Endothelial cell of umbilical vein (primary cell): ENCODE measurements at regions of chr9 and their contacts with region 1.

Region 1: DNA sequence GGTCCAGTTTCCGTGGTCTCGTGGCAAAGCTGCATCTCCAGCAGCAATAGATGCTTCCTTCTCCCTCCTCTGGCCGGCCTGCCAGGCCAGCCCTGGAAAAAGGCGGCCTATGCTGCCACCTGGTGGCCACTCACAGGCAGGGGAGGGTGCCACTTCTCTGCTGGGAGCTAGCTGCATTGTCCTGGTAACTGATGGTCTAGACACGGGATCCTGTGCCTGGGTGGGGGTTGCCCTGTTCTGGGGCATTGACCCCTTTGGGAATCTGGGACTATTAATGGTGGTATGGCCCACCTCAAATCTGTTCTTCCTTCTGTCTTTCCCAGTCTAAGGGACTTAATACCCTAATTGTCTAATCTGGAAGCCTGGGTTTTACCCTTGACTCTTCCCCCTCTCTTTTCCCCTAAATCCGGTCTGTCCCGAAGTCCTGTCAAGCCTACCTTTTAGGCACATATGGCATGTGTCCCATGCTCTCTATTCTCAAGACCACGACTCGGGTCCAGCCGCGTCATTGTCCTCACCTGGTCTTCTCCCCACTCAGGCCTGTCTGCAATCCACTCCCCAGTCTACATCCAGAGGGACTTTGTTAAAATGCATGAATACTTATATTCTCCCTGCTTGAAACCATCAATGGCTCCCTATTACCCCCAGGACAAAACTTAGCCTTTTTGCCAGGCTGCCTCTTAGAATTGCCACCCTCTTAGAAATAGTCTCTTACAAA is 20.0 kb upstream of the PTGS1 start:
- DNase-seq: peak; percentile 77
- H3K4me3 ChIP-seq: no peak overlapping the region
- H3K27ac ChIP-seq: no peak overlapping the region
- H3K4me1 ChIP-seq: peaks cover 23% of the 10 kb centered on the region
- H3K27me3 ChIP-seq: no peaks in the 10 kb centered on the region
- CTCF ChIP-seq: peak; percentile 92 to 94
- POLR2A ChIP-seq: no peak

Region 2: GRCh38 chr9:122125158-122125508 is 225.7 kb before region 1 on chr9:
- CTCF ChIA-PET with region 1: interaction called, 576 read pairs
- POLR2A ChIA-PET with region 1: interaction called, 4 read pairs
- dilution Hi-C with region 1: loop called (anchors 25 kb)
- intact Hi-C with region 1: loop called (anchors 1 kb)
- DNase-seq: peak; percentile 77
- H3K4me3 ChIP-seq: no peak overlapping the region
- H3K27ac ChIP-seq: no peak overlapping the region
- H3K4me1 ChIP-seq: peaks cover 20% of the 10 kb centered on the region
- H3K27me3 ChIP-seq: no peaks in the 10 kb centered on the region
- CTCF ChIP-seq: peak; percentile 85 to 95
- POLR2A ChIP-seq: no peak

Region 3: GRCh38 chr9:122151267-122151828 is 199.4 kb before region 1 on chr9:
- CTCF ChIA-PET with region 1: interaction called, 55 read pairs
- POLR2A ChIA-PET with region 1: no interaction called
- dilution Hi-C with region 1: no loop called
- intact Hi-C with region 1: no loop called
- DNase-seq: no peak
- H3K4me3 ChIP-seq: no peak overlapping the region
- H3K27ac ChIP-seq: no peak overlapping the region
- H3K4me1 ChIP-seq: peaks cover 3% of the 10 kb centered on the region
- H3K27me3 ChIP-seq: no peaks in the 10 kb centered on the region
- CTCF ChIP-seq: no peak
- POLR2A ChIP-seq: no peak

Region 4: DNA sequence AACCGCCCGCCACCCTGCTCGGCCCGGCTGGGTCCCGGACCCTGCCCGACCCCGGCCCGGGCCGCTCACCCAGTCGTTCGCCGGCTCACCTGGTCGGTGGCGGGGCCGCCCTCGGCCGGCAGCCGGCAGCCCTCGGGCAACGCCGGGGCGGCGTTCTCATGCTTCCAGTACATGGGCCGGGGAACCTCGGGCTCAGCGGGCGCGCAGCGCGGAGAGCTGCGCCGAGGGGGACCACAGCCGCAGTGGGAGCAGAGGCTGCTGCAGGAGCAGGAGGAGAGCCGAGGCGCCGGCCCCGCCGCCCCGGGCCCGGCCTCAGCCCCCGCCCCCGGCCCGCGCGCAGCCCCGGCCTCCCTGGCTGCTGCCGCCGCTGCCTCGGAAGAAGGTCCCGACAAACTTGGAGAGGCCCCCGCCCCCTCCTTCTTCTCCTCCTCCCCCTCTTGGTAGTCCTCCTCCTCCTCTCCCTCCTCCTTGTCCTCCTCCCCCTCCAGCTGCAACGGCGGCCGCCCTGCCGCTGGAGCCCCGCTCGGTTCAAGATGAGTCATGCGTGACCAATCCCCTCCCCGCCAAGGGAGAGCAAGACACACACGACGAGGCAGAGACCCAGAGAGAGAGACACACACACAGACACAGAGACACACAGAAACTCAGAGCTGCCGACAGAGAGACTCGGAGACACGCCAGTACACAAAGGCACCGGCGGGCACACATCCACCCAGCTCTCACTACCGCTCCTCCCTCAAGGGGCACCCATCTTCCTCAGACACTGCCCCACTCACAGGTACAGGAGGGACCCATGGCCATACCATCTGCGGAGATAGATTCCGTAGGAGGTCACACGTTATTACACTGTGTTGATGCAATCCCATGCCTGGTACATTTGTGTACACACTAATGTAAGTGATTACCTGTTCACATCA is 122.0 kb before region 1 on chr9 and contains the start of gene LHX6:
- CTCF ChIA-PET with region 1: interaction called, 15 read pairs
- POLR2A ChIA-PET with region 1: no interaction called
- dilution Hi-C with region 1: no loop called
- intact Hi-C with region 1: loop called (anchors 2 kb)
- DNase-seq: peak; percentile 43
- H3K4me3 ChIP-seq: peak within 1 kb of the TSS; percentile 18 to 55 (median 41)
- H3K27ac ChIP-seq: no peak within 1 kb of the TSS
- H3K4me1 ChIP-seq: peaks cover 10% of the 10 kb centered on the region
- H3K27me3 ChIP-seq: peaks cover 42 to 54% of the 10 kb centered on the region in 2 experiments
- CTCF ChIP-seq: no peak
- POLR2A ChIP-seq: no peak
- total RNA-seq, gene LHX6: 9.4 and 18.4 TPM in 2 replicates

Region 5: DNA sequence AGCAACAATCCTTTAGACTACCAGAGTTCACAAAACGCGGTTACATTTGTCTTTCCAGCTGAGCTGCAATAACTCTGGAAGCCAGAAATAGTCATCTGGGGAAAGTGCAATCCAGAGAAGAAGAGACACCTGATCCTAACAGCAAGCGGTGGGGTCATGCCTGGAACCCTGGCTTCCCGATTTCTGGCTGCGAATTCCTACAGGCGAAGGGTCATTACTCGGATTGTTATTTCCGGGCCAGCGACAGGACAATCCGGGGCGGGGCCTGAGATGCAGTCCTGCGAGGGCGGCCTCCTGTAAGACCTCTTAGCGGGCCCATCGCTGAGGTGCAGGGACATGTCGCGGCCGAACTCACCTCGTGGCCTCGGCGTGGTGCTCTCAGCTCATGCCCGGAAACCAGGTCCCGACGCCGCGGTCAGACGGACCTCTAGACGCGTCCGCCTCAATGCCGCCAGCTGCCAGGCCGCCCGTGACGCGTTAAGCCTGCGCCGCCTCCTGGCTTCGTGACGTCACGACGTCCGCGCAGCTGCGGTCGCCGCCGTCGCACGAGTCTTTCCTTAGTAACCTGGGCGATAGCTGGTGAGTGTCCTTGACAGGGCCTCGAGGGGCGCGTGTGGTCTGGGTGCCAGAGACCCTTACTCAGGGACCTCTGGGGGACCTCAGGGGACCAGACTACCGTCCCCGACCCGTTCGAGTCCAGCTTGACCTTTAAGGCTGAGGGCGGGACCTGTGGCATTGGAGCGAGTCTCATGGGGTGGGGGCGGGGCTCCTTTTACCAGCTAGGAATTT is 86.2 kb before region 1 on chr9 and contains the starts of genes MRRF and RBM18:
- CTCF ChIA-PET with region 1: interaction called, 17 read pairs
- POLR2A ChIA-PET with region 1: no interaction called
- dilution Hi-C with region 1: no loop called
- intact Hi-C with region 1: loop called (anchors 1 kb)
- DNase-seq: peak; percentile 95
- H3K4me3 ChIP-seq: peak within 1 kb of the TSS; percentile 53 to 88 (median 76)
- H3K27ac ChIP-seq: peak within 1 kb of the TSS; percentile 68
- H3K4me1 ChIP-seq: peaks cover 26% of the 10 kb centered on the region
- H3K27me3 ChIP-seq: no peaks in the 10 kb centered on the region
- CTCF ChIP-seq: no peak
- POLR2A ChIP-seq: peak; percentile 85
- total RNA-seq, gene MRRF: 36.4 and 36.5 TPM in 2 replicates
- total RNA-seq, gene RBM18: 26.9 and 28.6 TPM in 2 replicates

Region 6: GRCh38 chr9:122338994-122339393 is 11.8 kb before region 1 on chr9:
- CTCF ChIA-PET with region 1: interaction called, 17 read pairs
- POLR2A ChIA-PET with region 1: no interaction called
- dilution Hi-C with region 1: no loop called
- intact Hi-C with region 1: loop called (anchors 1 kb)
- DNase-seq: no peak
- H3K4me3 ChIP-seq: no peak overlapping the region
- H3K27ac ChIP-seq: no peak overlapping the region
- H3K4me1 ChIP-seq: peaks cover 16% of the 10 kb centered on the region
- H3K27me3 ChIP-seq: no peaks in the 10 kb centered on the region
- CTCF ChIP-seq: no peak
- POLR2A ChIP-seq: no peak

Region 7: GRCh38 chr9:122810306-122810946 is 459.6 kb after region 1 on chr9:
- CTCF ChIA-PET with region 1: interaction called, 22 read pairs
- POLR2A ChIA-PET with region 1: no interaction called
- dilution Hi-C with region 1: no loop called
- intact Hi-C with region 1: loop called (anchors 1 kb)
- DNase-seq: peak; percentile 87
- H3K4me3 ChIP-seq: no peak overlapping the region
- H3K27ac ChIP-seq: no peak overlapping the region
- H3K4me1 ChIP-seq: peaks cover 10% of the 10 kb centered on the region
- H3K27me3 ChIP-seq: no peaks in the 10 kb centered on the region
- CTCF ChIP-seq: peak; percentile 45 to 79
- POLR2A ChIP-seq: no peak